ENCODE measurements at regions of chr14 and their contacts with region 1.

Region 1: DNA sequence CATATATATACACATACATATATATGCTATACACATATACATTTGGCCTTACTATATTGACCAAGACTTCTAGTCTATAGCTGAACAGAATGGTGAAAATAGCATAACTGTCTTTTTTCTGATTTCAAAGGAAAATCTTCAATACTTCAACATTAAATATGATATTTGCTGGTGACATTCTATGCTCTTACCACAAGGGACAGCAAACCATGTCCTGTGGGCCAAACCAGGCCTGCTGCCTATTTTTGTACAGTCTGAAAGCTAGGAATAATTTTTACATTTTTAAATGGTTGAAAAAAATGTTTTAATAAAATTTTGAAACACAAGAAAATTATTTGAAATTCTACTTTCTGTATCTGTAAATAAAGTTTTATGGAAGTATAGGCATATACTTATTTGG is 63.6 kb downstream of the EML5 start:
- DNase-seq: peak; percentile 4
- ATAC-seq: no peak
- H3K4me3 ChIP-seq: no peak overlapping the region
- H3K27ac ChIP-seq: no peak overlapping the region
- H3K4me1 ChIP-seq: no peaks in the 10 kb centered on the region
- H3K27me3 ChIP-seq: no peaks in the 10 kb centered on the region
- CTCF ChIP-seq: peak; percentile 34; the same call in 1 of the 2 replicates
- POLR2A ChIP-seq: no peak
- RAD21 ChIP-seq: peak; percentile 42

Region 2: GRCh38 chr14:88765130-88765529 is 36.0 kb after region 1 on chr14:
- CTCF ChIA-PET with region 1: no interaction called
- POLR2A ChIA-PET with region 1: no interaction called
- dilution Hi-C with region 1: no loop called
- in situ Hi-C with region 1: no loop called
- intact Hi-C with region 1: loop called (anchors 5 kb)
- DNase-seq: peak; percentile 82
- ATAC-seq: peak; percentile 64
- H3K4me3 ChIP-seq: no peak overlapping the region
- H3K27ac ChIP-seq: no peak overlapping the region
- H3K4me1 ChIP-seq: no peaks in the 10 kb centered on the region; the same call in 1 of the 2 replicates
- H3K27me3 ChIP-seq: no peaks in the 10 kb centered on the region
- CTCF ChIP-seq: 0 out of 2 replicates have a peak, but pooled peaks have one; percentile 5
- POLR2A ChIP-seq: no peak
- RAD21 ChIP-seq: no peak

Region 3: GRCh38 chr14:89078021-89078795 is 349.0 kb after region 1 on chr14:
- CTCF ChIA-PET with region 1: no interaction called
- POLR2A ChIA-PET with region 1: no interaction called
- dilution Hi-C with region 1: no loop called
- in situ Hi-C with region 1: no loop called
- intact Hi-C with region 1: no loop called
- DNase-seq: no peak
- ATAC-seq: no peak
- H3K4me3 ChIP-seq: no peak overlapping the region
- H3K27ac ChIP-seq: no peak overlapping the region
- H3K4me1 ChIP-seq: no peaks in the 10 kb centered on the region
- H3K27me3 ChIP-seq: peaks cover 38% of the 10 kb centered on the region
- CTCF ChIP-seq: no peak
- POLR2A ChIP-seq: no peak
- RAD21 ChIP-seq: no peak